Activated CD8-positive, alpha-beta T cell treated with anti-CD3 and anti-CD28 coated beads for 36 hours (primary cell): ENCODE measurements at regions of chr1 and their contacts with region 1.

Region 1: GRCh38 chr1:222310836-222311235 is 237.1 kb downstream of the HHIPL2 start:
- DNase-seq: peak; percentile 16
- ATAC-seq: peak; percentile 27
- H3K4me3 Mint-ChIP-seq: no peak overlapping the region
- H3K27ac Mint-ChIP-seq: no peak overlapping the region
- H3K4me1 Mint-ChIP-seq: peaks cover 5% of the 10 kb centered on the region
- H3K27me3 Mint-ChIP-seq: no peaks in the 10 kb centered on the region
- CTCF ChIP-seq: no peak

Region 2: GRCh38 chr1:222288040-222288439 is 22.8 kb before region 1 on chr1:
- CTCF ChIA-PET with region 1: no interaction called
- POLR2A ChIA-PET with region 1: no interaction called
- intact Hi-C with region 1: no loop called
- DNase-seq: no peak
- ATAC-seq: no peak
- H3K4me3 Mint-ChIP-seq: no peak overlapping the region
- H3K27ac Mint-ChIP-seq: no peak overlapping the region
- H3K4me1 Mint-ChIP-seq: no peaks in the 10 kb centered on the region
- H3K27me3 Mint-ChIP-seq: no peaks in the 10 kb centered on the region
- CTCF ChIP-seq: no peak

Region 3: GRCh38 chr1:222326006-222326709 is 15.3 kb after region 1 on chr1:
- CTCF ChIA-PET with region 1: no interaction called
- POLR2A ChIA-PET with region 1: no interaction called
- intact Hi-C with region 1: loop called (anchors 1 kb)
- DNase-seq: no peak
- ATAC-seq: no peak
- H3K4me3 Mint-ChIP-seq: no peak overlapping the region
- H3K27ac Mint-ChIP-seq: no peak overlapping the region
- H3K4me1 Mint-ChIP-seq: no peaks in the 10 kb centered on the region
- H3K27me3 Mint-ChIP-seq: no peaks in the 10 kb centered on the region
- CTCF ChIP-seq: no peak